Activated naive CD4-positive, alpha-beta T cell treated with anti-CD3 and anti-CD28 coated beads, Interleukin-2, amount 10 ng/mL, durations not matched to agents 7 days and 5 days (primary cell): ENCODE measurements at regions of chr6 and their contacts with region 1.

Region 1: DNA sequence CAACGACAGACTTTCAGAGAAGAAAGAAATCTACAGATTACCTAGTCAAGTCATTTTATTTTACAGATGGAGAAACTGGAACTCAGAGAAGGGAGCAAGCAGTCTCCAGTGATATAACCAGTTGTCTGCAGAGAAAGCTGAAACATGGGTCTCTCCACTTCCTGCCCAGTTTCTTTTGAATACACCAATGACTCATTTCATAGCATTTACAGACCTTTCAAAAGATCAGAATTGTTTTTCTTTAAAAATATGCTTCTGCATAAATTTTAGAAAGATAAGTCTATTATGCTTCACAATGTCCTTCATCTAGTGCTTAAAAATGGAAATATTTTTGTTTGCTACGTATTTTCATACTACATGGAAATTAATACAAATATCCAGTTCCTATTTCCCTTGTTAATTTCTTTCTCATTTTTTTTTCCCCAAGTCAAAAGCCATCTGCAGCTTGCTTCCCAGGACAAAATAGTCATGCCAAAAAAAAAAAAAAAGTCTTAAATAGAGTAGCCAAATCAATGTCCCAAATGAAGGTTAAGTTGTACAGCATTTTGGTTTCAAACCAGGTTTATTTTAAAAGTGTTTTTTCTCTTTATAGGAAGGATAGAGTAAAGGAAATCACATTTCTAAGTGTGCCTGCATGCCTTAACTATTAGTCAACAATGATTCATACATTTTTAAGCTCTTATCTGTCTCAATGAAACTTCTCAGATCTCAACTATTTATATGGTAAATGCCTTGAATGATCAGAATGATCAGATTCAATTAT is 36.9 kb downstream of the ARHGAP18 start:
- DNase-seq: peak; percentile 35
- H3K4me3 Mint-ChIP-seq: peak overlapping the region; percentile 59
- H3K27ac Mint-ChIP-seq: peak overlapping the region; percentile 94
- H3K4me1 Mint-ChIP-seq: peaks cover 66% of the 10 kb centered on the region
- H3K27me3 Mint-ChIP-seq: peaks cover 3% of the 10 kb centered on the region

Region 2: DNA sequence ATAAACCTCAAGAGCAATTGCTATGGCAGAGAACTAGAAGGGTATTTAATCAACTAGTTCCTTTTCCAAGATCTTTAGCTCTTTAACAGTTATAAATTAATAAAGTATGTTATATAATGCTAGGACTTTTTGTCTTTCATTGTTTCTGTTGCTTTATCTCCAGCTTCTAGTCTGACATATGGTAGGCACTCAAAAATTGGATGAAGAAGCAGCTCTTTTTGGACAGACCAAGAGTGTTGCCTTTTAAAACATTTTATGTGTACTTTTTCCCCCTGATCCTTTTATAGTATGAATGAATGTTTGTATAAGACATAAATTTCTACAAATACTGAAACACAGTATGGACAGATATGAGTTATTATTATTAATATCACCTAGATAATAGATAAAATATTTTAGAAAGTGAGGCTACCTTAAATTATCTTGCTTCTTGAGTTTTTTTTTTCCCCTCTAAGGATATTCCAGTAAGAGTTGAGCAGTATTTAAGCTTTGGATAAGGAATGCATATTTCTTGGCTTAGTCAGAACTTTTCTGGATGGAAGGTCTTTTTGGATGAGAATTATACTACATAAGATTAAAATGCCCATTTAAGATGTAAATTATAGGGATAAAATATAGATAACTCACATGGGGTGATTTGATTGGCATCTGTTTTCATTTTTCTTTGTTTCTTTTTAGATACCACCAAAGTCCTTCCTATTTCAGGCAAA is 773.6 kb before region 1 on chr6:
- CTCF ChIA-PET with region 1: no interaction called
- DNase-seq: no peak
- H3K4me3 Mint-ChIP-seq: no peak overlapping the region
- H3K27ac Mint-ChIP-seq: no peak overlapping the region
- H3K4me1 Mint-ChIP-seq: no peaks in the 10 kb centered on the region
- H3K27me3 Mint-ChIP-seq: no peaks in the 10 kb centered on the region

Region 3: GRCh38 chr6:129730477-129731165 is 57.6 kb after region 1 on chr6:
- CTCF ChIA-PET with region 1: interaction called, 50 read pairs
- DNase-seq: peak; percentile 50
- H3K4me3 Mint-ChIP-seq: no peak overlapping the region
- H3K27ac Mint-ChIP-seq: no peak overlapping the region
- H3K4me1 Mint-ChIP-seq: peaks cover 8% of the 10 kb centered on the region
- H3K27me3 Mint-ChIP-seq: no peaks in the 10 kb centered on the region